ENCODE measurements at regions of chr4 and their contacts with region 1.

Region 1: GRCh38 chr4:177441803-177442622 is at the start of gene AGA:
- DNase-seq: peak; percentile 94
- H3K4me3 Mint-ChIP-seq: peak within 1 kb of the TSS; percentile 90
- H3K27ac Mint-ChIP-seq: peak within 1 kb of the TSS; percentile 95
- H3K4me1 Mint-ChIP-seq: peaks cover 31% of the 10 kb centered on the region
- H3K27me3 Mint-ChIP-seq: no peaks in the 10 kb centered on the region
- total RNA-seq, gene AGA: 16.0 and 16.3 TPM in 2 replicates

Region 2: DNA sequence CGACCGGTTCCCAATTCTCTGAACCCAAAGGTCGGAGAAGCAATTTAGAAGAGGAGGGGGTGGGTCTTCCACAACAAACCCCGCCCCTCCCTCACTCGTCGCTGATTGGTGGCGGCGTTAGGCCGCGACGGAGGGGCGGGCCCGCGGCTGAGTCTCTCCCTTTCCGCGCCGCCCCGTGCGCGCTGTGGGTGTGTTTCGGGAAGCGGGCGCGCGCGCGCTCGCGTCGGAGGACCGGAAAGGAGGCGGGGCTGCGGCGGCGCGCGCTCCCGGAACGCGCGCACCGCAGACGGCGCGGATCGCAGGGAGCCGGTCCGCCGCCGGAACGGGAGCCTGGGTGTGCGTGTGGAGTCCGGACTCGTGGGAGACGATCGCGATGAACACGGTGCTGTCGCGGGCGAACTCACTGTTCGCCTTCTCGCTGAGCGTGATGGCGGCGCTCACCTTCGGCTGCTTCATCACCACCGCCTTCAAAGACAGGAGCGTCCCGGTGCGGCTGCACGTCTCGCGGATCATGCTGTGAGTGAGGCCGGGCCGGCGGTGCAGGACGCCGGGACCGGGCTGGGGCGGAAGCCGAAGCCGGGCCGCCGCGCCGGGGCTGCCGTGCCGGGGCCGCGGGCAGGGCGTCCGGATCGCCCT is 1122.2 kb before region 1 on chr4 and contains the start of gene SPCS3:
- intact Hi-C with region 1: loop called (anchors 2 kb)
- DNase-seq: peak; percentile 92
- H3K4me3 Mint-ChIP-seq: peak within 1 kb of the TSS; percentile 98
- H3K27ac Mint-ChIP-seq: peak within 1 kb of the TSS; percentile 97
- H3K4me1 Mint-ChIP-seq: peaks cover 60% of the 10 kb centered on the region
- H3K27me3 Mint-ChIP-seq: no peaks in the 10 kb centered on the region
- total RNA-seq, gene SPCS3: 197 and 203 TPM in 2 replicates

Region 3: GRCh38 chr4:177250056-177250696 is 191.8 kb before region 1 on chr4:
- intact Hi-C with region 1: loop called (anchors 2 kb)
- DNase-seq: peak; percentile 66
- H3K4me3 Mint-ChIP-seq: no peak overlapping the region
- H3K27ac Mint-ChIP-seq: no peak overlapping the region
- H3K4me1 Mint-ChIP-seq: peaks cover 15% of the 10 kb centered on the region
- H3K27me3 Mint-ChIP-seq: peaks cover 15% of the 10 kb centered on the region

Region 4: DNA sequence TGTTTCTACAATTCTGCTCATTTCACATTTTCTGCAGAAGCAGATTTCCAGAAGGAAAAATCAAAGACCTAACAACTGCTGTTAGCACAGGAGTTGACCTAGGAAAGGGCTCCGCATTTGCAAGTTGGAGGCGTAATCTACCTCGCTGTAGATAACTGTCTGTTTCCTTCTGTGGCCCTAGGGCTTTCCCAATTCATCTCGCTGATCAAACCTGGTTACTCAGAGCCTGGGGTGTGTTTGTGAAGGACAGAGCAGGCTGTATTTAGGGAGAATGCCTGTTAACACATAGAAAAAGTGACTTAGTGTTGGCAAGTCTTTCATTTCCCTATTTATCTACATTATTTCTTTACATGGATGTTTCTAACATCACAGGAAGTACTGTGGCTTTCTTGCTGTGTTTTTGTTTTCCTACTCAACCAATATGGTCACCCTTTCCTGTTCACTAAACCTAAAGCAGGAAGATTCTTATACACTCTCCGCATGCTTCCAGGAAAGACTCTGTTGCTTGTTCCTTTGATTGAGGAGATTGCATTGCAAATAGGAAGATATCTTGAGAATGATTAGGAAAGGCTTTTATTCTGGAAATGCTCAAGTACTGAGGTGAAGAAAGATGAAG is 40.2 kb before region 1 on chr4:
- intact Hi-C with region 1: loop called (anchors 1 kb)
- DNase-seq: no peak
- H3K4me3 Mint-ChIP-seq: peak overlapping the region; percentile 35
- H3K27ac Mint-ChIP-seq: peak overlapping the region; percentile 15
- H3K4me1 Mint-ChIP-seq: peaks cover 50% of the 10 kb centered on the region
- H3K27me3 Mint-ChIP-seq: peaks cover 4% of the 10 kb centered on the region

Region 5: DNA sequence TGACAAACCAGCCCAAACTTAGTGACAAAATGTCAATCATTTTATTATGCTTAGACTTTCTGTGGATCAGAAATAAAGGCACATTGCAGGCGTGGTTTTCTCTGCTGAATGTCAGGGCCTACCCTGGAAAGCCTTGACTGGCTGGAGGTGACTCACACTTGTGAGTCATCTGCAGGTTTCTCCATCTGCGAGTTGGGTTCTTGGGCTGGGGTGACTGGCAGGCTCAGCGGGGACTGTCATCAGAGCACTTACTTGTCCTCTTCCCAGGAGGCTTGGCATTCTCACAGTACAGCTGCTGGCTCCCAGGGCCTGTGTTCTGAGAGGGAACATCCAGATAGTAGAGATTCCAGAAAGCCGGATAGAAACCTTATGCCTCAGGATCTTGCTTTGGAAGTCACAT is 154.0 kb after region 1 on chr4:
- intact Hi-C with region 1: loop called (anchors 10 kb)
- DNase-seq: peak; percentile 11
- H3K4me3 Mint-ChIP-seq: no peak overlapping the region
- H3K27ac Mint-ChIP-seq: no peak overlapping the region
- H3K4me1 Mint-ChIP-seq: peaks cover 7% of the 10 kb centered on the region
- H3K27me3 Mint-ChIP-seq: no peaks in the 10 kb centered on the region

Measured in activated T-helper 1 cell treated with anti-CD3 and anti-CD28 coated beads, Interleukin-12 subunit alpha, Interleukin-12 subunit beta, Interleukin-2, Interleukin-4 antibody, amounts not matched to agents 30 ng/mL and 10 ng/mL and 1 ng/mL, durations not matched to agents 14 hours and 24 hours and 36 hours (primary cell).